Mammary epithelial cell (primary cell): ENCODE measurements at regions of chr12 and their contacts with region 1.

Region 1: DNA sequence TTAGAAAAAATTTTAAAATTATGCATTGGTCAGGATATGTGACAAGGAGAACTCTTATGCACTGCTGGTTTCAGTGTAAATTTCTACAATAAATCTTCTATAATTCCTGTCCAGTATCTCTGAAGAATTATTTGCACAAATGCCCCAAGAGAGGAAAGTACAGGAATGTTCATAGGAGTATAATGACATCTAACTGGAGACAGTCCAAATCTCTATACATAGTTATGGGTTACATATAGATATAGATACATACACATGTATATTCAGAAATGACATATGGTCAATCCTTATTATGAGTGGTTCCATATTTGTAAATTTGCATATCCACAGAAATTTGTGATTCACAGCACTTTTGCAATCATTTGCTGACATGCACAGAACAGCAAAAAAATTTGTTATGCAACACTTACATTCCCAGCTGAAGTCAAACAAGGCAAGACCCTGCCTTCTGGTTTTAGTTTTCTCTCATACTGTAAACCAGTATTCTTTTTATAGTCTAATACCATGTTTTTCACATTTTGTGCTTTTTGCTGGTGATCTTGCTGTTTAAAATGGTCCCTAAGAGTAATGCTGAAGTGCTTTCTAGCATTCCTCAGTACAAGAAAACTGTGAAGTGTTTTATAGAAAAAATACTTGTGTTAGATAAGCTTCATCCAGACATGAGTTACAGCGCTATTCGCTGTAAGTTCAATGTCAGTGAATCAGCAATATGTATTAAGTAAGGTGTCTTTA is 103.8 kb downstream of the SLC16A7 start:
- DNase-seq: peak; percentile 65
- H3K4me3 ChIP-seq: peak overlapping the region in 1 of 3 experiments; percentile 1
- H3K27ac ChIP-seq: no peak overlapping the region
- H3K4me1 ChIP-seq: peaks cover 17% of the 10 kb centered on the region
- H3K27me3 ChIP-seq: no peaks in the 10 kb centered on the region
- CTCF ChIP-seq: no peak

Region 2: GRCh38 chr12:58519845-58520244 is 1179.7 kb before region 1 on chr12:
- CTCF ChIA-PET with region 1: no interaction called
- dilution Hi-C with region 1: no loop called
- in situ Hi-C with region 1: no loop called
- intact Hi-C with region 1: loop called (anchors 5 kb)
- DNase-seq: no peak
- H3K4me3 ChIP-seq: no peak overlapping the region
- H3K27ac ChIP-seq: no peak overlapping the region
- H3K4me1 ChIP-seq: no peaks in the 10 kb centered on the region
- H3K27me3 ChIP-seq: no peaks in the 10 kb centered on the region
- CTCF ChIP-seq: no peak

Region 3: DNA sequence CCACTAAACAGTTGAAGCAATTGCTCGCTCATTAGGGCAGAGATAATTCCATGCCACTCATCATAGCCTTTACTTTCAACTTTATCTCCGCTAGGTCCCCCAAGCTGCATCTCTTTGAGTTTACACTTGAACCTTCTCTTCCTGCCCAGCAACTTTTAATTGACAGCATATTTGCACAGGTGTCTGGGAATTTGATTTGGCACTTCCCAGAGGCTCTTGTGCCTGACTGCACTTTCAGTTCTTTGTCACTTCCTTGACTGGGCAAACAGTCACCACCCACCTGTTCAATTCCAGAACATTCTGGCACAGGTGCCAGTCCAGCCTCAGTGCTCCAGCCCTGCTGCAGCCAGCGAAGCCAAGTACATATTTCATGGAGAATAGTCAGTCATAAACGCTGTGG is 669.2 kb before region 1 on chr12:
- CTCF ChIA-PET with region 1: no interaction called
- dilution Hi-C with region 1: no loop called
- in situ Hi-C with region 1: no loop called
- intact Hi-C with region 1: no loop called
- DNase-seq: no peak
- H3K4me3 ChIP-seq: no peak overlapping the region
- H3K27ac ChIP-seq: no peak overlapping the region
- H3K4me1 ChIP-seq: no peaks in the 10 kb centered on the region
- H3K27me3 ChIP-seq: no peaks in the 10 kb centered on the region
- CTCF ChIP-seq: no peak

Region 4: DNA sequence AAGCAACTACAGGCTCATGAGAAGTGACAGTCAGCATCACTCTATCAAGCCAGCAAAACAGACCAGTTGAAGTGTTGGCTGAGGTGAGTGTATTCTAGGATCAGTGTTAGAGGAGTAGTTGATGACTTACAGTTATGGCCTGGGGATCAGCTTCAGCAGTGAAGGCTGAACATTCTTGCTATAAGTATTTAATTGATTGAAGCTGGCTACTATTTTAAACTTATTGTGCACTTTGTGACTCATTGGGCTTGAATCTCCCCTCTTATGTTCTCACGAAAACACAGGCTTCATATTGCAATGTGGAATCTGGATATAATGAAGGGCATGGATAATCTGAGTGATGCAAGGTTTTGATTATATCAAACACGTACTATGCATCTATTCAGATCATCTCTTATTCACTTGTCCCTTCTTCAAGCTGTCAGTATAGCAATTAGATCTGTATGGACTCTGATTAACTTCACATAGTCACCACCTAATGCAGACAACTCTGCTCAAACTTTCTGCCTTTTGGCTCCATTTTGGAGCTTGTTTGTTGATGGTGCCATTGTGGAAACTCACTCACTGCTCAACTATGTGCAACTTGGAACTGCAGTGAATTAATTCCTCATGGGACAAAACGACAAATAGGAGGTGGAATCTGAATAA is 205.4 kb after region 1 on chr12:
- CTCF ChIA-PET with region 1: no interaction called
- dilution Hi-C with region 1: no loop called
- in situ Hi-C with region 1: no loop called
- intact Hi-C with region 1: no loop called
- DNase-seq: no peak
- H3K4me3 ChIP-seq: no peak overlapping the region
- H3K27ac ChIP-seq: no peak overlapping the region
- H3K4me1 ChIP-seq: no peaks in the 10 kb centered on the region
- H3K27me3 ChIP-seq: no peaks in the 10 kb centered on the region
- CTCF ChIP-seq: no peak